H1 (cell line): ENCODE measurements at regions of chr13 and their contacts with region 1.

Region 1: DNA sequence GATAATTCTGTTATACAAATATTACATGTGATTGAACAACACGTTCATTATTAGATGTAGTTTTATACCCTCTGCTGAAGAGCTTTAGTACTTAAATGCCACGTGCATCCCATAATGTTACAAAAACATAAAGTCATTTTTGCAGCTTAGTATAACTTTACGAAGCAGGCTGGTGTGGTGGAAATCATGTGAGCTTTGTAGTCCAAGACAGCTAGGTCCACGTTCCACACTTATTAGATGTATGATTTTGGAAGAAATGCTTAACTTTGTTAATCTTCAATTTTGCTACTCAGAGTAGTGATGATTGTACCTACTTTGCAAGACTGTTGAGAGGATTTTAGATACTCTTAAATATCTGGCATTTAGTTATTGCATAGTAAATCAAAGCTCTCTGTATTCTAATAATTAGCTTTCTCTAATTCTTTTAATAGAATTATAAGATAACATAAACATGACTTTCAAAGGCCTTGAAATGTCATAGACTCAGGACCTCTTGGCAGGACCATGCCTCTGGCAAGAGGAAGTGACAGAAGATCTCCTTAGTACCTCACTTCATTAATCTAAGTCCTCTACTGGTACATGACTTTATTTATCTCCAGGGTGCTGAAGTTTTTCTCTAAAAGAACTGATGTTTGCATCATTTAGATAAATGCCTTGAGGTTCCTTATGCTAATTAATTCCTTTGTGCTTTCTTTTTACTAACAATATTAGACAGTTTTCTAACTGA is 153.7 kb downstream of the PCDH20 start:
- DNase-seq: no peak
- H3K4me3 ChIP-seq: no peak overlapping the region
- H3K27ac ChIP-seq: no peak overlapping the region
- H3K4me1 ChIP-seq: no peaks in the 10 kb centered on the region
- H3K27me3 ChIP-seq: no peaks in the 10 kb centered on the region
- CTCF ChIP-seq: no peak
- EP300 ChIP-seq: no peak
- POLR2A ChIP-seq: no peak
- RAD21 ChIP-seq: no peak

Region 2: DNA sequence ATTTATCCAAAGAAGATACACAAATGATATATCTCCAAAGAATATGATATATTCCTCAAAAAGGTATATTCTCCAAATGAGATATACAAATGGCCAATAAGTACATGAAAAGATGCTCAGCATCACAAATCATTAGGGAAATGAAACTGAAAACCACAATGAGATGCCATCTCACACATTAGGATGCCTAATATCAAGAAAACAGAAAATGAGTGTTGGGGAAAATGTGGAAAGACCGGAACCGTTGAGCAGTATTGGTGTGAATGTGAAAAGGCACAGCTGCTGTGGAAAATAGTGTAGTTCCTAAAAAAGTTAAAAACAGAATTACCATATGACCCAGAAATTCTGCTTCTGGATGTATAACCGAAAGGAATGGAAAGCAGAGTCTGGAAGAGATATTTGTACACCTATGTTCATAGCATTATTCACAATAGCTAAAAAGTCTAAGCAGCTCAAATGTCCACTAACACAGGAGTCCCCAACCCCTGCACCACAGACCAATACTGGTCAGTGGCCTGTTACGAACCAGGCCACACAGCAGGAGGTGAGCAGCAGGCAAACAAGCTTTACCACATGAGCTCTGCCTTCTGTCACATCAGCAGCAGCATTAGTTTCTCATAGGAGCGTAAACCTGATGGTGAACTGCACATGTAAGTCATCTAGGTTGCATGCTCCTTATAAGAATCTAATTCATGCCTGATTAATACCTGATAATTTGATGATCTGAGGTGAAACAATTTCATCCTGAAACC is 138.2 kb before region 1 on chr13:
- CTCF ChIA-PET with region 1: interaction called, 23 read pairs
- POLR2A ChIA-PET with region 1: no interaction called
- DNase-seq: no peak
- H3K4me3 ChIP-seq: no peak overlapping the region
- H3K27ac ChIP-seq: no peak overlapping the region
- H3K4me1 ChIP-seq: peaks cover 0 to 3% (median 1%) of the 10 kb centered on the region in 4 experiments; a peak in 3 of 7 replicates
- H3K27me3 ChIP-seq: no peaks in the 10 kb centered on the region
- CTCF ChIP-seq: no peak
- EP300 ChIP-seq: no peak
- POLR2A ChIP-seq: no peak
- RAD21 ChIP-seq: no peak